ENCODE measurements at regions of chr6 and their contacts with region 1.

Region 1: DNA sequence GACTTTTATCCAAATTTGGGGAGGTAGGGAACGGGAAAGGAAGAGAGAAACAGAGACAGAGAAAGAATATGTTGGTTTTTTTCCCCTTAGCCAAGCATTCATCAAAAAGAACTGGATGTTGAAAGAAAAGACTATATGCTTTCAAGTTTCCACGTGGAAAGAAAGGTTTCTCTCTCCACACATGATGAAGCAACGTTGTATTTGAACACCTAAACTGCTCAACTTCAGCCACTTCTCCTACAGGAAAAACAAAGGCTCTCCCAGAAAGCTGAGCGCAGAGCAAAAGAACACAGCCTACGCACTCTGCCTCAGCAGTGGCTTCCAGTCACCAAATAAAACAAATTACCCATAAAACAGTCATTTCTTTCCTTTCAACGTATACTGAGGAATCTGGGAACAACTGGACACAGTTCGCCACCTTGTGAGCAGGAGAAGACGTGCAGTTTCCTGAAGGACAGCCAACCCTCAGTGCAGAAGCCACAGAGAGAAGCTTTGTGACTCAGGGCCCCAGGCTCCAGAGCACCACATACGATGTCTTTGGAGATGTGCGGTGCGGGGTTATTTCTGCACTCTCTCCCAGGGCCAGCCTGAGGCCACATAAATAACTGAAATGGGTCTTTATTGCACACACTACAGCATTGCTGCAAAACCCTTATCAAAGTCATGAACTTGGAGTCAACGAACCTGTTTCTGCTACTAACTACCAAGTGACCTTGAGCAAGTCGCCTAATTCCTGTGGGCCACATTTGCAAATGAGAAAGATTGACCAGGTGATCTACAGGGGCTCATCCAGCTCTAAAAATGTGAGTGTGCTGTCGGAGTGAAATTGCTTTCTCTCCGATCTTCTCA is 10.1 kb downstream of the IL17F start:
- H3K4me3 ChIP-seq: no peak overlapping the region
- H3K27ac ChIP-seq: no peak overlapping the region; the same call in 1 of the 2 replicates
- H3K4me1 ChIP-seq: peaks cover 10% of the 10 kb centered on the region
- CTCF ChIP-seq: peak; percentile 79; the same call in 1 of the 2 replicates

Region 2: DNA sequence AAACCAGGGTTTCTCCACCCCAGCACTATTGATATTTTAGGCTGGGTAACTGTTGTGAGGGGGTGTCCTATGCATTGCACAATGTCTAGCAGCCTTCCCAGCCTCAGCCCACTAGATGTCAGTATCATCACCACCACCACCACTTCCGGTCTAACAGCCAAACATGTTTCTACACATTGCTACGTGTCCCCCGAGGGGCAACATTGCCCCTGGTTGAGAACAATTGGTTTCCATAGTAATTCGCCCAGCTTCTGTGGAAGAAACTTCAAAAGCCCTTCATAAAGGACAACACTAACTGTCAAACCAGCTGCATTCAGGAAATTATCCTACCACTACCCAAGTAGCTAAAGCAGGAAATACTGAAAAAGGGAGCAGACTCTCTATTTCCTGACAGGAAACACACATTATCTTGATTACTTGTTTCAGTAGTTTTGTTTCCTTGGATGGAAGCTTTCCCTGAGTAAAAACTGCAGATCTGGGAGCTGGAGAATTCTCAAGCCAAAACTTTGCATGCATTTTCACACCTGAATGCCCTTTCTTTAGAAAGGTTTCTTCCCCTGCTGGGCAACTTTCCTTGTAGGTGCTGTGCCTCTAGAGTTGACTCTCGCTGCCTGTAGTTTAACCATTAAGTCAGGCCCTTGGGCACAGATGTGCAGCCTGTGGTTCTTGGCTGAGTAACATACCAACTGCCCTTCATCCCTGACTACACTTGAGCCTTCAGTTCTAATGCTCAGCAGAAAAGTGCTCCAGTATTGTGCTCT is 170.4 kb before region 1 on chr6:
- CTCF ChIA-PET with region 1: interaction called, 27 read pairs
- POLR2A ChIA-PET with region 1: no interaction called
- H3K4me3 ChIP-seq: no peak overlapping the region
- H3K27ac ChIP-seq: no peak overlapping the region
- H3K4me1 ChIP-seq: no peaks in the 10 kb centered on the region; the same call in 1 of the 2 replicates
- CTCF ChIP-seq: peak; percentile 48

Region 3: DNA sequence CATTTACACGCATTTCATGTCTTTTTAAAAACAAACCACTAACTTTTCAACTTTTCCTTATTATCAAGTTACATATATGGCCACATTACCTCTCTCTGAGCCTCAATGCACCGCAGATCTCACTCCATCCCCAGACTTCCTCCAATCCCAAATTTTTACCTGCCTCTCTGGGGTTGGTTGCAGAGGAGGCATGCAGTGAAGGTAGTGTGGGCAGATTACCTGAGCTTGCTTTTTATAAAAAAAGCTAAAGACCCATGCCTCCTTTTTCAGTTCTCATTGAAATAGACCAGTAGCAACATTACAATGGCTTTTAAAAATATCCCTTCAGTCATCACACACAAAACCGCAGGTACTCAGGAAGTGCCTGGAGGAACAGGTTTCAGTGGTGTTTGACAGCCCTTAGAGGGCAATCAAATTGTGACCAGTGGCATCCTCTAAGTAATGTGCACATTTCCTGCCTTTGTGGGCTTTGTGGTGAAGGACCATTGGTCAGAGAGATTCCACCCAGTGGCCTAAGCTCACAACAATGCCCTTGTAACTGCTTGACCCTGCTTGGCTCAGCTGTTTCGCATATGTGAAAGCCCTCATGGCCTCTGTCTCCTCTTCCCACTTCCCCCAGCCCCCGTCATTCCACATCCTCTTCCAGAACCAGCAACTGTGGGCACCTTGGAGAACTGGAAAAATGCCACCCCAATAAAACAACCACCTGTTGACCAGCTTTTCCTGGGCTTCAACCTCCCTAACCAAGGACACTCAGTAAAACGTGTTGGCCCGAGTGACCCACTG is 78.2 kb before region 1 on chr6:
- CTCF ChIA-PET with region 1: interaction called, 20 read pairs
- POLR2A ChIA-PET with region 1: no interaction called
- H3K4me3 ChIP-seq: no peak overlapping the region
- H3K27ac ChIP-seq: no peak overlapping the region
- H3K4me1 ChIP-seq: peaks cover 5% of the 10 kb centered on the region; the same call in 1 of the 2 replicates
- CTCF ChIP-seq: no peak

Region 4: GRCh38 chr6:52176550-52176949 is 57.6 kb before region 1 on chr6:
- CTCF ChIA-PET with region 1: interaction called, 12 read pairs
- POLR2A ChIA-PET with region 1: no interaction called
- H3K4me3 ChIP-seq: no peak overlapping the region
- H3K27ac ChIP-seq: no peak overlapping the region
- H3K4me1 ChIP-seq: peaks cover 6% of the 10 kb centered on the region; the same call in 1 of the 2 replicates
- CTCF ChIP-seq: no peak

Region 5: DNA sequence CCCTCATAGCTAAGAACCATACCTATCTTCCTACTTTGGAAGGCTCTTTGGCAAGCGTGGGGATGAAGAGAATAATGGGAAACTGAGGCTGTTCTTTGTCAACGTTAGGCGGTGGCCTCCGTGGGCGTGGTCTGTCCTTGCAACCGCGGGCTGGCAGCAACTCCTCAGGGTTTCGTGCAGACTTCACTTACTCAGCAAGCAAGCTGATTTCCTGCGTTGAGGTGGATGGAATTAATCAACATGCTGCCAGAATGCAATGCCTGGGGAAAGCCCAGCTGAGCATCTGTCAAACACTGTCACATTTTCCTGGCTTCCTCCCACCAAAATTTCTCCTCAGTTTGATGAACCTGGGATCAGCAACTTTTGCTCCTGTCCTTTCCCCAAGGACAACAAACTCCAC is 19.3 kb after region 1 on chr6:
- CTCF ChIA-PET with region 1: interaction called, 10 read pairs
- POLR2A ChIA-PET with region 1: no interaction called
- H3K4me3 ChIP-seq: no peak overlapping the region
- H3K27ac ChIP-seq: no peak overlapping the region
- H3K4me1 ChIP-seq: peaks cover 5% of the 10 kb centered on the region
- CTCF ChIP-seq: no peak

Region 6: DNA sequence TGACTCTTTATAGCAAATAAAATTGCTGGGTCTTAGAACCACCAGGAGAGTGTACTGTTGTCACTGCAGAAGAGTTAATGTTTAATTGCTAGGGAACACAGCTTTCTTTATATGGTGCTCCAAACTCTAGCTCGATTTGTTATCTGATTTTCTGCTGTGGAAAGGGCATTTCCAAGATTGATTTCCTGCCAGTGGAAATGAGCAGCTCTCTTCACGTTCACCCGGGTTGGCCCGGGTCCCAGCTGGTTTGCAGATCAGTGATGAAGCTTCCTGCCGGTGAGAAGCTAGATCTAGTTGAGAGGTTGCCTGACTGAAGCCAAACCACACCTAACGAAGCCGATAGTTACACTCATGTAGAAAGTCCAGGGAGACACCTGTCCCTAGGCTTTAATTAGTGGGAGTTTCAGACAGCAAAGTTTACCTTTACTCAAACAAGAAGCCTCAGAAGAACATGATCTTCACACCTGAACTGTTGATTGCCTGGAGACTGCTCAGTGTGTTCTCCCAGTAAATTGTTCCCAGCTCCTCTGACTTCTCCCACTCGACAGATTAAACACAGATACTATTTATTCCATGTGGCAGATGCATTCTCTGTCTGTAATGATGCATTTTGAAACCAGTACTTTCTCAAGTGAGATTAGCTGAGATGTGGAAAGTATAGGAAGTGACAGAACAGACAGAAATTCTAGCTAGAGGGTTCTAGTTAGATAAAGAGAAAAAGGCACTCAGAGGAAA is 155.6 kb after region 1 on chr6:
- CTCF ChIA-PET with region 1: no interaction called
- POLR2A ChIA-PET with region 1: no interaction called
- H3K4me3 ChIP-seq: no peak overlapping the region
- H3K27ac ChIP-seq: no peak overlapping the region
- H3K4me1 ChIP-seq: peaks cover 5% of the 10 kb centered on the region
- CTCF ChIP-seq: no peak; the same call in 1 of the 2 replicates

Region 7: GRCh38 chr6:52566853-52567279 is 332.7 kb after region 1 on chr6:
- CTCF ChIA-PET with region 1: no interaction called
- POLR2A ChIA-PET with region 1: no interaction called
- H3K4me3 ChIP-seq: no peak overlapping the region
- H3K27ac ChIP-seq: no peak overlapping the region
- H3K4me1 ChIP-seq: peaks cover 17% of the 10 kb centered on the region
- CTCF ChIP-seq: no peak